ENCODE measurements at regions of chr16 and their contacts with region 1.

Region 1: DNA sequence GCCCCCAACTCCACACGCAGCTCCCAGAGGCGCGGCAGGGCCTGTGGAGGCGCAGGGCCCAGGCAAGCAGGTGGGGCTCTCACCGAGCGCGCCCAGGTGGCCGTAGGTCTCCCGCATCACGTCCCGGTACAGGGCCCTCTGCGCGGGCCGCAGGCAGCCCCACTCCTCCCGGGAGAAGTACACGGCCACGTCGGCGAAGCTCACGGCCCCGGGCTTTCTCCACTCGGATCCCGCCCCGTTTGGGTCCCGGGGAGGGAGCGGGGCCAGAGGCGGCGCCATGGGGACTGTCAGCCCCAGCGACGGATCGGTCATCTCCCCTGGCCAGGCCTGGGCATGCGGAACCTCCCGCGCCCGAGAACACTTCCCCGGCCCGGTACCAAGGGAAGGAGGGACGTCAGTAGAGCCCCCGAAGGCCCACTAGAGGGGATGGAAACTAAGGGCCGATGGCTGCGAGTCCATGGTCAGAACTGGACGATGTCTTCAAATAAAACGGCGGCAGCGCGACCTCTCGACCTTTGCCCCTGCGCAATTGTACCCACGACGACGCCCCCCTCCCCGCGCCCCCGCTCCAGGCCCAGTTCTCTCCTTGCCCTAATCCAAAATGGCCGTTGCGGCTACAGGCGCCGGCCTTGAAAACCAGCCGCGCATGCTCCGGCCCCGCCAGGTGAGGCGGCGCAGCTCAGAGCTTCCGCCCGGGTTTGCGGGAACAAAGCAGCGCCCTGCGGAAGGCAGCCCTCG is at the start of gene ZNF747:
- DNase-seq: peak; percentile 89 to 92 (median 90)
- H3K4me3 ChIP-seq: peak within 1 kb of the TSS; percentile 86 to 92
- H3K4me3 Mint-ChIP-seq: peak within 1 kb of the TSS; percentile 87 to 99 (median 93)
- H3K27ac ChIP-seq: peak within 1 kb of the TSS; percentile 91
- H3K27ac Mint-ChIP-seq: peak within 1 kb of the TSS; percentile 94 to 99 (median 97)
- H3K4me1 ChIP-seq: peaks cover 42% of the 10 kb centered on the region
- H3K4me1 Mint-ChIP-seq: peaks cover 15 to 51% (median 31%) of the 10 kb centered on the region in 4 donors
- H3K27me3 ChIP-seq: no peaks in the 10 kb centered on the region
- H3K27me3 Mint-ChIP-seq: no peaks in the 10 kb centered on the region
- total RNA-seq, gene ZNF747: 15.7 to 17.8 TPM

Region 2: DNA sequence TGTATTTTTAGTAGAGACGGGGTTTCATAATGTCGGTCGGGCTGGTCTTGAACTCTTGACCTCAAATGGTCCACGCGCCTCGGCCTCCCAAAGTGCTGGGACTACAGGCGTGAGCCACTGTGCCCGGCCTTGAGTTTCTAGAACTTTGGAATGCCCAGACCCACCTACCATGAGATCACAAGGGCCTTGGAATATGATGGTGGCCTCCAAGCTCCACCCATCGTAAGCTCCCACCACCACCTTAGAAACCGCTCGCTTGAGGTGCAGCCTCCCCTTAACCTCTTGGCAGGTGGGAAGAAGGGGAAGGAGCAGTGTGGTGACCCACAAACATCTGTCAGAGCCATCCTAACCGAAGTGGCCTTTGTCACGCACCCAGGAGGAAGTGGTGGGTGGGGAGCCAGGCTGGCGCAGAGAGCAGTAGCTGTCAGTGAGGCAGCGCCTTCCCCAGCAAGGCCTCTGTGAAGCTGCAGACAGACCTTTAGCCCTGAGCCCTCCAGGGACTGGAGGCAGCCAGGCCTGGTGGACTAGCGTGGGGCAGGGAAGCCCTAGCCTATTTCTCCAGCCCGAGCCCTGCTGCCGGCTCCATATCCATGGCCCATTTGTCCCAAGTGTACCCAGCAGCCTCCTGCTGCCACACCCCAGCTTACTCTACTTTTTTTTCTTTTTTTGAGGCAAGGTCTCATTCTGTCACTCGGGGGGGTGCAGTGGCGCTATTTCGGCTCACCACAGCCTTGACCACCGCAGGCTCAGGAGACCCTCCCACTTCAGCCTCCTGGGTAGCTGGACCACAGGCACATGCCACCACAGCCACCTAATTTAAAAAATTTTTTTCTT is 75.8 kb before region 1 on chr16:
- CTCF ChIA-PET with region 1: no interaction called
- POLR2A ChIA-PET with region 1: interaction called, 19 read pairs
- intact Hi-C with region 1: no loop called
- DNase-seq: peak; percentile 72 to 85 (median 76)
- H3K4me3 ChIP-seq: peak overlapping the region in 1 of 2 donors; percentile 19
- H3K4me3 Mint-ChIP-seq: peak overlapping the region; percentile 64 to 81 (median 70)
- H3K27ac ChIP-seq: peak overlapping the region; percentile 48
- H3K27ac Mint-ChIP-seq: peak overlapping the region; percentile 87 to 95 (median 89)
- H3K4me1 ChIP-seq: peaks cover 35% of the 10 kb centered on the region
- H3K4me1 Mint-ChIP-seq: peaks cover 18 to 49% (median 31%) of the 10 kb centered on the region in 4 donors
- H3K27me3 ChIP-seq: no peaks in the 10 kb centered on the region
- H3K27me3 Mint-ChIP-seq: no peaks in the 10 kb centered on the region

Region 3: GRCh38 chr16:30546115-30546514 is 11.6 kb after region 1 on chr16:
- CTCF ChIA-PET with region 1: interaction called, 56 read pairs
- POLR2A ChIA-PET with region 1: interaction called, 457 read pairs
- intact Hi-C with region 1: no loop called
- DNase-seq: no peak
- H3K4me3 ChIP-seq: no peak overlapping the region
- H3K4me3 Mint-ChIP-seq: no peak overlapping the region
- H3K27ac ChIP-seq: no peak overlapping the region
- H3K27ac Mint-ChIP-seq: peak overlapping the region in 2 of 7 donors; percentile 5 to 31
- H3K4me1 ChIP-seq: peaks cover 16% of the 10 kb centered on the region
- H3K4me1 Mint-ChIP-seq: peaks cover 6 to 20% (median 12%) of the 10 kb centered on the region in 4 donors
- H3K27me3 ChIP-seq: no peaks in the 10 kb centered on the region
- H3K27me3 Mint-ChIP-seq: no peaks in the 10 kb centered on the region

Region 4: GRCh38 chr16:30571695-30572600 is 37.4 kb after region 1 on chr16 and contains the start of gene ZNF688:
- CTCF ChIA-PET with region 1: interaction called, 26 read pairs
- POLR2A ChIA-PET with region 1: interaction called, 98 read pairs
- intact Hi-C with region 1: loop called (anchors 1 kb)
- DNase-seq: peak; percentile 94 to 100 (median 97)
- H3K4me3 ChIP-seq: peak within 1 kb of the TSS; percentile 65 to 71
- H3K4me3 Mint-ChIP-seq: peak within 1 kb of the TSS; percentile 86 to 96 (median 91)
- H3K27ac ChIP-seq: peak within 1 kb of the TSS; percentile 90
- H3K27ac Mint-ChIP-seq: peak within 1 kb of the TSS; percentile 96 to 97 (median 97)
- H3K4me1 ChIP-seq: peaks cover 50% of the 10 kb centered on the region
- H3K4me1 Mint-ChIP-seq: peaks cover 22 to 51% (median 36%) of the 10 kb centered on the region in 4 donors
- H3K27me3 ChIP-seq: no peaks in the 10 kb centered on the region
- H3K27me3 Mint-ChIP-seq: no peaks in the 10 kb centered on the region
- total RNA-seq, gene ZNF688: 21.4 to 22.7 TPM

Region 5: DNA sequence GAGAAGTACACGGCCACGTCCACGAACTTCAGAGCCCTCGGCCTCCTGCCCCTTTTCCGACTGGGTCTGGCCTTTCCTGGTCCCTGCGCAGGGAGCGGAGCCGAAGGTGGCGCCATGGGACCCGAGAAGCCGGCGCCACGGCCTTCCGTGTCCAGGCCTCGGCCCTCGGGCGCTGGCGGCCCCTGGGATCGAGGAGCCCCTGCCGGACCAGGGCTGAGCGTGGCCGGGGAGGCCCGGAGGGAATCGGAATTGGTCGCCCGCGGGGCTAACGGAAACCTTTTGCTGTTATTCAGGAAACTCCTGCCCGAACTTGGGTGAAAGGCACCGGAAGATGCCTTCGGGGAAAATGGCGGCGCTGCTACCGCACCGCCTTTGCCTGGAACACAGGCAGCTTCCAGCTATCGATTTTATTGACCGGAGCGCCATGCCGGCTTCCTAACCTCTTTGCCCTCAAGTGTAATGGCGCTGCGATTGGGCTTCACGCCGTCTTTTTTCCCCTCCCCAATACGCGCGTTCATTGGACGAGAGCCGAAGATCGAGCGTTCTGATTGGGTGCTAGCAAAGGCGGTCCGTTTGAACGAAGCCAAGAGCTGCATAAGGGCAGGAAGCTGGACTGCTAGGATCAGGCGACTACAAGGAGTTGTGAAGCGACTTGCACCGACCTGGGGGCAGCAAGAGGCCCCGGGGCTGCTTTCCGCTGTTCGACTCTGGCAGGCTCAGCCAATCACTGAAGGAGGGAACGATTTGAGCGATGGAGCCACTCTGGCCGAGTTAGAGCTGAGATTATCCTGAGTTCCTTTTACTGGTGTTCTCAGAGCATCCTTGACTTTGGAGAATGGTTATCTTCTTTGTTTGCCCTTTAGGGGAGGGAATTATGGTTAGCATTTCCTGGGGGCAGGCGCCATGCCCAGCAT is 75.6 kb after region 1 on chr16 and contains the start of gene ZNF689:
- CTCF ChIA-PET with region 1: no interaction called
- POLR2A ChIA-PET with region 1: interaction called, 18 read pairs
- intact Hi-C with region 1: no loop called
- DNase-seq: peak; percentile 92 to 98 (median 95)
- H3K4me3 ChIP-seq: peak within 1 kb of the TSS; percentile 71 to 99
- H3K4me3 Mint-ChIP-seq: peak within 1 kb of the TSS; percentile 85 to 96 (median 94)
- H3K27ac ChIP-seq: peak within 1 kb of the TSS; percentile 97
- H3K27ac Mint-ChIP-seq: peak within 1 kb of the TSS; percentile 93 to 98 (median 96)
- H3K4me1 ChIP-seq: peaks cover 21% of the 10 kb centered on the region
- H3K4me1 Mint-ChIP-seq: peaks cover 10 to 18% (median 13%) of the 10 kb centered on the region in 4 donors
- H3K27me3 ChIP-seq: no peaks in the 10 kb centered on the region
- H3K27me3 Mint-ChIP-seq: no peaks in the 10 kb centered on the region
- total RNA-seq, gene ZNF689: 13.1 to 14.5 TPM